Ascending aorta (tissue), 2 donors: ENCODE measurements at regions of chr6 and their contacts with region 1.

Region 1: GRCh38 chr6:84428300-84428907 is 201.0 kb upstream of the CEP162 start:
- DNase-seq: peak; percentile 10 to 88
- H3K4me3 ChIP-seq: no peak overlapping the region
- H3K27ac ChIP-seq: no peak overlapping the region
- H3K4me1 ChIP-seq: peaks cover 0 to 11% of the 10 kb centered on the region in 2 donors
- H3K27me3 ChIP-seq: no peaks in the 10 kb centered on the region
- CTCF ChIP-seq: peak; percentile 59 to 84 (median 82)

Region 2: DNA sequence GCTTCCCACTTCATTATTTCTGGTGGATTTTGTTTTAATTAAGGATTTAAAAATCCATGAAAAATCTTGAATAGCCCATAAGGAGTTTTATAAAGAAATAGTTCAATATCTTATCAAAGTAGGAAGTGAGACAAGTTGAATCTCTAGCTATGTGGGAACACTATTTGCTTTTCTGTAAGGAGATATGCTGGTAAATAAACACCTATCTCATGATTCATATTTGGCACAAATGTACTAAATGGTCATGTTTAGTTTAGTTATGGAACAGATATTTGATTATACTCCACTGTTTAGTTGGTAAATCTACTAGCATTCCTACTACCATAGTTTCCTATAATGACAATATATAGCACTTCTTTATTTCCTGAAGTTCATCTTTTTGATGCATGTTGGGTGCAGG is 38.9 kb after region 1 on chr6:
- intact Hi-C with region 1: no loop called
- DNase-seq: no peak
- H3K4me3 ChIP-seq: no peak overlapping the region
- H3K27ac ChIP-seq: no peak overlapping the region
- H3K4me1 ChIP-seq: peaks cover 0 to 4% of the 10 kb centered on the region in 2 donors
- H3K27me3 ChIP-seq: no peaks in the 10 kb centered on the region
- CTCF ChIP-seq: no peak

Region 3: GRCh38 chr6:84492241-84493165 is 64.1 kb after region 1 on chr6:
- intact Hi-C with region 1: loop called (anchors 5 kb)
- DNase-seq: no peak
- H3K4me3 ChIP-seq: no peak overlapping the region
- H3K27ac ChIP-seq: peak overlapping the region; percentile 52 to 56
- H3K4me1 ChIP-seq: peaks cover 0 to 8% of the 10 kb centered on the region in 2 donors
- H3K27me3 ChIP-seq: no peaks in the 10 kb centered on the region
- CTCF ChIP-seq: no peak

Region 4: GRCh38 chr6:84569882-84570281 is 141.5 kb after region 1 on chr6:
- intact Hi-C with region 1: loop called (anchors 1 kb)
- DNase-seq: no peak
- H3K4me3 ChIP-seq: no peak overlapping the region
- H3K27ac ChIP-seq: no peak overlapping the region
- H3K4me1 ChIP-seq: no peaks in the 10 kb centered on the region
- H3K27me3 ChIP-seq: no peaks in the 10 kb centered on the region
- CTCF ChIP-seq: no peak

Region 5: DNA sequence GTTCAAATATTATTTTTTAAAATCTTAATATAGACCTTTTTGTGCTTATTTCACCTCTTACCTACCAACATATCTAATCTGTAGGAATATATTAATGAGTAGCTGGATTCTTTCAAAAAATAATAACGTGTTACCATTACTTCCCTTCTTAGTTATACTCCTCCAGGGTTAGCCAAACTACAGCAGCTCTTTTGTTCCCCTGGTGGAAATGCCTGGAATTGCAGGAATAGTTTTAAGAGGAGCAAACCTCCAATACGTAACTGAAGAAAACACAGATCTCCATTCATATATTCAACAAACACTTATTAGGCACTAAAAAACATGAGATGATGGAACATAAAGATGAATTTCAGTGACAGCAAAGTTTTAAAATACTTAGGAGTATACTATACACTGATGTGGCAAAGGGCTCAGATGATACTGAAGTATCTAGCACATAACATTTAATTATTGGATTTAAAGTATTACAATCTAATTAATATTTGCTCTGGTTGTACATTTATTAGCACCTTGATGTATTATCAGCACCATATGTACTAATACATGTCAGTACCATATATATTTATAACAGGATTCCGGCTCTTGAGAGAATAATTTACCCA is 257.7 kb after region 1 on chr6:
- intact Hi-C with region 1: loop called (anchors 5 kb)
- DNase-seq: no peak
- H3K4me3 ChIP-seq: no peak overlapping the region
- H3K27ac ChIP-seq: peak overlapping the region; percentile 84 to 86
- H3K4me1 ChIP-seq: peaks cover 0 to 29% of the 10 kb centered on the region in 2 donors
- H3K27me3 ChIP-seq: no peaks in the 10 kb centered on the region
- CTCF ChIP-seq: peak; percentile 27 to 47 (median 46)